CD4-positive, alpha-beta memory T cell (primary cell): ENCODE measurements at regions of chr14 and their contacts with region 1.

Region 1: GRCh38 chr14:47846008-47846407 is 170.6 kb upstream of the MDGA2 start:
- DNase-seq: no peak
- H3K4me3 ChIP-seq: no peak overlapping the region
- H3K4me3 Mint-ChIP-seq: no peak overlapping the region
- H3K27ac ChIP-seq: no peak overlapping the region
- H3K27ac Mint-ChIP-seq: no peak overlapping the region
- H3K4me1 ChIP-seq: no peaks in the 10 kb centered on the region
- H3K4me1 Mint-ChIP-seq: no peaks in the 10 kb centered on the region
- H3K27me3 ChIP-seq: no peaks in the 10 kb centered on the region
- H3K27me3 Mint-ChIP-seq: no peaks in the 10 kb centered on the region

Region 2: GRCh38 chr14:47785058-47785457 is 61.0 kb before region 1 on chr14:
- CTCF ChIA-PET with region 1: no interaction called
- POLR2A ChIA-PET with region 1: no interaction called
- intact Hi-C with region 1: no loop called
- DNase-seq: no peak
- H3K4me3 ChIP-seq: no peak overlapping the region
- H3K4me3 Mint-ChIP-seq: no peak overlapping the region
- H3K27ac ChIP-seq: no peak overlapping the region
- H3K27ac Mint-ChIP-seq: no peak overlapping the region
- H3K4me1 ChIP-seq: no peaks in the 10 kb centered on the region
- H3K4me1 Mint-ChIP-seq: no peaks in the 10 kb centered on the region
- H3K27me3 ChIP-seq: no peaks in the 10 kb centered on the region
- H3K27me3 Mint-ChIP-seq: no peaks in the 10 kb centered on the region

Region 3: GRCh38 chr14:47917345-47917954 is 71.4 kb after region 1 on chr14:
- CTCF ChIA-PET with region 1: no interaction called
- POLR2A ChIA-PET with region 1: no interaction called
- intact Hi-C with region 1: no loop called
- DNase-seq: no peak
- H3K4me3 ChIP-seq: no peak overlapping the region
- H3K4me3 Mint-ChIP-seq: no peak overlapping the region
- H3K27ac ChIP-seq: no peak overlapping the region
- H3K27ac Mint-ChIP-seq: peak overlapping the region in 1 of 7 donors; percentile 48
- H3K4me1 ChIP-seq: no peaks in the 10 kb centered on the region
- H3K4me1 Mint-ChIP-seq: no peaks in the 10 kb centered on the region
- H3K27me3 ChIP-seq: no peaks in the 10 kb centered on the region
- H3K27me3 Mint-ChIP-seq: no peaks in the 10 kb centered on the region

Region 4: DNA sequence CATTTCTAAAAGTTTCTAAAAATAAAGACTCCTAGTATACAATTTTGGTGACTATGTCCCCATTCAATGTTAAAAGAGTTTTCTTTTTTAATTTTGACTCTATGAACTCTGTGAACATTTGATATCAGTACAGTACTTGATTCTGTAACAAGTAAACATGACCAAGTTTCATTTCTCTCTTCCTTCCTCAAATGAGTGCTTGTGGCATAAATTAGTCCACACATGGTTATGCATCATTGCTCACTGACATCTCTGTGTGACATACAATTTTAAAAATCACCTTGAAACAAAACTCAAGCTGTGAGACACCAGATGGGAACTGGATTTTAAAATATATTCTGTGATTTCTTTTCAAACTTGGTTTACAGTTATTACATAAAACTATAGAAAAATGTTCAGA is 83.3 kb after region 1 on chr14:
- CTCF ChIA-PET with region 1: no interaction called
- POLR2A ChIA-PET with region 1: no interaction called
- intact Hi-C with region 1: loop called (anchors 2 kb)
- DNase-seq: no peak
- H3K4me3 ChIP-seq: no peak overlapping the region
- H3K4me3 Mint-ChIP-seq: no peak overlapping the region
- H3K27ac ChIP-seq: no peak overlapping the region
- H3K27ac Mint-ChIP-seq: no peak overlapping the region
- H3K4me1 ChIP-seq: no peaks in the 10 kb centered on the region
- H3K4me1 Mint-ChIP-seq: no peaks in the 10 kb centered on the region
- H3K27me3 ChIP-seq: no peaks in the 10 kb centered on the region
- H3K27me3 Mint-ChIP-seq: no peaks in the 10 kb centered on the region

Region 5: GRCh38 chr14:48008646-48009045 is 162.6 kb after region 1 on chr14:
- CTCF ChIA-PET with region 1: no interaction called
- POLR2A ChIA-PET with region 1: no interaction called
- intact Hi-C with region 1: no loop called
- DNase-seq: no peak
- H3K4me3 ChIP-seq: no peak overlapping the region
- H3K4me3 Mint-ChIP-seq: no peak overlapping the region
- H3K27ac ChIP-seq: no peak overlapping the region
- H3K27ac Mint-ChIP-seq: no peak overlapping the region
- H3K4me1 ChIP-seq: no peaks in the 10 kb centered on the region
- H3K4me1 Mint-ChIP-seq: no peaks in the 10 kb centered on the region
- H3K27me3 ChIP-seq: no peaks in the 10 kb centered on the region
- H3K27me3 Mint-ChIP-seq: no peaks in the 10 kb centered on the region